Left cardiac atrium (tissue), 4 donors: ENCODE measurements at regions of chr21 and their contacts with region 1.

Region 1: DNA sequence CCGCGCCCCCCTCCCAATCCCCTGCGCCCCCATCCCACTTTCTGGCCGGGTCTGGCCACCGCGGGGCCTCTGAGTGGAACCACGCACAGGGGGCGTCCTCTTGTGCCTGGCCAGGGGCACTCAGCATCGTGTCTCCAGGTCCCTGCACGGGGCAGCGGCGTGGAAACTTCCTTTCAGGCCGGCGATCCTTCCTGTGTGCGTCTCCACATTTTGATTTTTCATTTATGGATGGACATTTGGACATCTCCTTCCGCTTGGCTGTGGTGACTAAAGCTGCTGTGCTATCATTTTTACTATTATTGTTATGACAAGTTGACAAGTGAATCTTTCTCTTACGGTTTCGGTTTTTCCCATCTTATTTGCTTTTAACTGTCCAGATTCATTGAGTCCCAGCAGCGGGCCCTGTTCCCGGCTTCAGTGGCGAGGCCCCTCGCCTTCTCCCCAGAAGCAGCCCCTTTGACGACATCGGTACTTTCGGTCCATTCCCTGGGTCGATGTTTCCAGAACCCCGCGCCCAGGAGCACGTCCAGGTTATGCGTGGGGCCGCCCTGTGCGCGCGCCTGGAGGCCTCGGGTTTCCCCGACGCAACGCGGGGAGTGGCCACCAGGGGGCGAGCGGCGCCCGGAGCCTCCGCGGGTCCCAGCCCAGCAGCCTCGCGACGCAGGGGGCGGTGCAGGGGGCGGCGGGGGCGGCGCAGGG is 12.4 kb upstream of the SLC19A1 start:
- DNase-seq: peak; percentile 84
- ATAC-seq: peak; percentile 67 to 72

Region 2: GRCh38 chr21:45378258-45378966 is 176.2 kb before region 1 on chr21:
- intact Hi-C with region 1: no loop called
- DNase-seq: no peak
- ATAC-seq: no peak

Region 3: GRCh38 chr21:45596704-45597318 is 42.2 kb after region 1 on chr21:
- intact Hi-C with region 1: loop called in 1 of 2 experiments (anchors 5 kb)
- DNase-seq: peak; percentile 78
- ATAC-seq: peak; percentile 78 to 82

Region 4: GRCh38 chr21:45607021-45607908 is 52.6 kb after region 1 on chr21:
- intact Hi-C with region 1: no loop called
- DNase-seq: no peak
- ATAC-seq: no peak

Region 5: DNA sequence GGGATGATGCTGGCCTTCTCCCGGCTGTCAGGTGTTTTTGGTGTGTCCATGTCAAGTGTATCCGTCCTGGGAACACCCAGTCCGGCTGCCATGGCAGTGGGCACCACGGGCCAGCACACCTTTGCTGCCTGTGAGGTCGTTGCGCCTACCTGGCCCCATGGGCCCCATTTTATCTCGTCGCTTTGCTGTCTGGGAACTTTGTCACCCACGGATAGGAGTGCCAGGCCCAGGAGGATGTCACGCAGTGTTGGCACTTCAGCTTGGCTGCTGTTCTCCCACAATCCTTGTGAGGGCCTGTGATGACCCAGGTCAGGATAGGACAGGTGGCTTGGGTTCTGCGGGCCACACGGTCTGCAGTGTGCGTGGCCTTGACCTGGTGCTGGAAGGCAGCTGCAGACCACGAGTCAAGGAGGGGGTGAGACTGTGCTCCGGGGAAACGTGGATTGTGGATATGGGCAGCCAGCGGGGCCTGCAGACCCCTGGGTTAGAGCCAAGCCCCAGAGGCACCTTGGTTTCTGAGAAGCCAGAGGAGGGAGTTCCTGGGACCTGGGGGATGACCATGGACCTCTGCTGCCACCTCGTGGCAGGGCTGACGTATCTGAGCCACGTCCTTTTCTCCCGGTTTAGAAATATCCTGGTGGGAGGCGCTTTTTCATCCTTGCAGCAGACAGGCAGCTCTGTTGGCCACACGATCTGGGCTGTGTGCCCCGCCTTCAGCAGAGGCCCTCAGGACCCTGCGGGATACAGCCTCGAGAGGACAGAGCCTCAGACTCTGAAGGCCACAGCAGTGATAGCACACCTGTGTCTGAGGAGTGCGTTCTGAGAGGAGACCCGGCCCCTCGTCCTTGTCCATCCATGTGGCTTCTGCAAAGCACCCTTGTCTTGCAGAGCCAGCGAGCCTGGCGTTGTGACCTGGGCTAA is 265.8 kb after region 1 on chr21:
- intact Hi-C with region 1: loop called (anchors 1 to 2 kb)
- DNase-seq: peak; percentile 80
- ATAC-seq: peak; percentile 87 to 93

Region 6: GRCh38 chr21:45923146-45923545 is 368.5 kb after region 1 on chr21:
- intact Hi-C with region 1: loop called in 1 of 2 experiments (anchors 5 kb)
- DNase-seq: peak; percentile 80
- ATAC-seq: peak; percentile 91 to 92